IMR-90 (cell line): ENCODE measurements at regions of chr1 and their contacts with region 1.

Region 1: GRCh38 chr1:22673486-22674409 is 20.7 kb downstream of the C1QB start:
- DNase-seq: peak; percentile 74
- ATAC-seq: peak; percentile 91
- H3K4me3 ChIP-seq: no peak overlapping the region
- H3K27ac ChIP-seq: no peak overlapping the region
- H3K4me1 ChIP-seq: no peaks in the 10 kb centered on the region
- H3K27me3 ChIP-seq: peaks cover 42% of the 10 kb centered on the region
- CTCF ChIP-seq: peak; percentile 96
- POLR2A ChIP-seq: no peak
- RAD21 ChIP-seq: peak; percentile 96

Region 2: DNA sequence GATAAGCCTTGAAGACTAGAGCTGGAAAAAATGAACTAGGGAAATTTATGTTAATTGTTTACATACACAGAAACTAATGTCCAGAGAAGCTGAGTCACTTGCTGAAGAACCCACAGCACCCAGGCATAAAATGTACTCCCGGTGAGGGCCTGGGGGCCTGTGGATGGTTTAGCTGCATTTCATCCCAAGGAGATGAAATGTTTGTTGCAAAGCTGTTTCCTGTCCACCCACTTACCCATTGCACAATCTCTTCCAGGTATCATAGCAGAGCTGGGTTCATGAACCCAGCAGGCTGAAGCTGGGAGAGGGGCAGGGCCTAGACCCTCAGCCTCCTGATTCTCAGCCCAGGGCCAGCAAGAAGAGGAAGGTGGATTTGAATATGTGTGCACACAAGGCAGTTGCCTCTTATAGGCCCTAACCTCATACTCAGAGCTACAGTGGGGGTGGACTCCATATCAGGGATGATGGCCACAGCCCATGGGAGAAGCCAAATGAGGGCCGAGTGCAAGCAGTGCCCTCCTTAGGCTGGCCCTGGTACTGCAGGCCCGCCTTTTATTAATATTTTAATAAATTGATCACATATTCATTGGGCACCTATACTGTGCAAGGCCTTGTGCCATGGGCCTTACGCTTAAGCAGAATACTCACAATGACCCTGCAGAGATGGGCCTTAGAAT is 188.2 kb after region 1 on chr1:
- CTCF ChIA-PET with region 1: interaction called, 4 read pairs
- POLR2A ChIA-PET with region 1: no interaction called
- dilution Hi-C with region 1: no loop called
- in situ Hi-C with region 1: no loop called
- intact Hi-C with region 1: loop called (anchors 1 kb)
- DNase-seq: peak; percentile 80
- ATAC-seq: peak; percentile 98
- H3K4me3 ChIP-seq: no peak overlapping the region
- H3K27ac ChIP-seq: peak overlapping the region; percentile 30
- H3K4me1 ChIP-seq: peaks cover 7% of the 10 kb centered on the region
- H3K27me3 ChIP-seq: no peaks in the 10 kb centered on the region
- CTCF ChIP-seq: peak; percentile 94
- POLR2A ChIP-seq: no peak
- RAD21 ChIP-seq: peak; percentile 86

Region 3: DNA sequence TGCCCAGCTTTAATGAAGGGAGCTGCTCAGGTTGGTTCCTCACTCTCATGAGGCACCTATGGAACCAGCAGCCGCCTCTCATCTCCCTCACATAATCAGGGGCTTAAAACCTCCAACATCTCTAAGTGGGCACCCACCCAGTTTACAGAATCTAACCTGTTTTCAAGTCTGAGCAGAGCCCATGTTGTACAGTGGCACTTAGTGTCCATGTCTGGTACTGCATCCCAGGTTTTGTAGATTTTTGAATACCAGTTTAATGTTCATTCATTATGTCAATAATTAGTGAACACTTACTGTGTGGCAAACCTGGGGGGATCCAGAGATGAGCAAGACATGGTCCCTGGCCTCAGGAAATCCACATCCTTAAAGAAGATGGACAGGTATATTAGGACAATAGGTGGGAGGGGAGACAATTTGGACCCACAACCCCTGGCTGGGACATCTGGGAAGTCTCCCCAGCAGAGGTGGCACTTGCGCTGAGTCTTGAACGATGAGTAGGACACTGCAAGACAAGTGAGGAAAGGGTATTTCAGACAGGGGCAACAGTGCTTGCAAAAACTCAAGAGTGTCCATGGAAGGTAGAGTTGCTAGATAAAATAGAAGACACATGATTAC is 215.6 kb after region 1 on chr1:
- CTCF ChIA-PET with region 1: interaction called, 3 read pairs
- POLR2A ChIA-PET with region 1: no interaction called
- dilution Hi-C with region 1: no loop called
- in situ Hi-C with region 1: no loop called
- intact Hi-C with region 1: loop called (anchors 1 kb)
- DNase-seq: peak; percentile 51
- ATAC-seq: peak; percentile 70
- H3K4me3 ChIP-seq: no peak overlapping the region
- H3K27ac ChIP-seq: no peak overlapping the region
- H3K4me1 ChIP-seq: peaks cover 5% of the 10 kb centered on the region; the same call in 1 of the 2 replicates
- H3K27me3 ChIP-seq: no peaks in the 10 kb centered on the region
- CTCF ChIP-seq: peak; percentile 74
- POLR2A ChIP-seq: no peak
- RAD21 ChIP-seq: peak; percentile 78

Region 4: GRCh38 chr1:22922640-22923039 is 248.9 kb after region 1 on chr1:
- CTCF ChIA-PET with region 1: no interaction called
- POLR2A ChIA-PET with region 1: no interaction called
- dilution Hi-C with region 1: no loop called
- in situ Hi-C with region 1: loop called (anchors 5 kb)
- intact Hi-C with region 1: no loop called
- DNase-seq: peak; percentile 43
- ATAC-seq: no peak
- H3K4me3 ChIP-seq: no peak overlapping the region
- H3K27ac ChIP-seq: no peak overlapping the region
- H3K4me1 ChIP-seq: peaks cover 9% of the 10 kb centered on the region
- H3K27me3 ChIP-seq: peaks cover 12% of the 10 kb centered on the region; the same call in 1 of the 2 replicates
- CTCF ChIP-seq: no peak
- POLR2A ChIP-seq: no peak
- RAD21 ChIP-seq: no peak

Region 5: GRCh38 chr1:22930235-22930912 is 256.6 kb after region 1 on chr1:
- CTCF ChIA-PET with region 1: interaction called, 4 read pairs
- POLR2A ChIA-PET with region 1: no interaction called
- dilution Hi-C with region 1: no loop called
- in situ Hi-C with region 1: no loop called
- intact Hi-C with region 1: loop called (anchors 1 kb)
- DNase-seq: peak; percentile 17
- ATAC-seq: peak; percentile 96
- H3K4me3 ChIP-seq: no peak overlapping the region
- H3K27ac ChIP-seq: no peak overlapping the region
- H3K4me1 ChIP-seq: no peaks in the 10 kb centered on the region
- H3K27me3 ChIP-seq: peaks cover 43% of the 10 kb centered on the region
- CTCF ChIP-seq: peak; percentile 92
- POLR2A ChIP-seq: no peak
- RAD21 ChIP-seq: peak; percentile 90

Region 6: DNA sequence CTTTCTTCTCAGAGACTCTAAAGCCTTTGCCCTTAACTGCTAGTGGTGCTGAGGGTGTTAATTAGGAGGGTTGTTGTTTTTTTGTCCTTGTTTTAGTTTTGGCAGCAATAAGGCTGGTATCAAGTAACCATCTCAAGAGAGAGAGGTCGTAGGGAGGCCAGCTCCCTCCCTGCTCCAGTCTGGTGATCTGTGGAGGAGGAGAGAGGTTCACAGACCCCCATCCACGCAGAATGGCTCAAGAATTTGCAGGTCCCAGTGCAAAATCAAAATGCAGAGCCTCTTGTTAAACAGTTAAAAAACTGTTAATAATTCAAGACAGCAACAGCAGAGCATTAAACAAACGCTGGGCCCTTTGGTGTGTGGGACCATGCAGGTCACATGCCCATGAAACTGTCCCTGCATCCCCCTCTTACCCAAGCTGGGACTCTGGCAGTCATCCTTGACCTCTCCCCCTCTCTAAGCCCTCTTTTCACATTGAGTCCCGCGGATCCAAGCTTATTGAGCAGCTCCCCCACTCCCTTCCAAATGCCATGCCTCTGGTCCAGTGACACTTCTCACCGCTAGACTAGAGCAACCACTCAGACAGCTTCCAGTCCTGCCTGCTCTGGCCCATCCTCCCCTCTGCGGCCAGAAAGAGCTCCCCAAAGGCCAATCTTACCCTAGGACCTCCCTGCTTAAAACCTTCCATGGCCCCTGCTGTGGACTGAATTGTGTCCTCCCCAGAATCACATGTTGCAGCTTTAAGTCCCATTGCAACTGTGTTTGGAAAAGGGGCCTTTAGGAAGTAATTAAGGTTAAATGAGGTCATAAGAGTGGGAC is 970.2 kb after region 1 on chr1:
- CTCF ChIA-PET with region 1: no interaction called
- POLR2A ChIA-PET with region 1: no interaction called
- dilution Hi-C with region 1: no loop called
- in situ Hi-C with region 1: no loop called
- intact Hi-C with region 1: no loop called
- DNase-seq: no peak
- ATAC-seq: peak; percentile 42; the same call in 1 of the 2 replicates
- H3K4me3 ChIP-seq: no peak overlapping the region
- H3K27ac ChIP-seq: no peak overlapping the region
- H3K4me1 ChIP-seq: no peaks in the 10 kb centered on the region
- H3K27me3 ChIP-seq: peaks cover 28% of the 10 kb centered on the region
- CTCF ChIP-seq: no peak
- POLR2A ChIP-seq: no peak
- RAD21 ChIP-seq: no peak